B cell (primary cell): ENCODE measurements at regions of chr11 and their contacts with region 1.

Region 1: GRCh38 chr11:74255741-74256369 is 55.6 kb downstream of the P4HA3 start:
- DNase-seq: peak; percentile 72
- ATAC-seq: peak; percentile 51
- H3K4me3 ChIP-seq: no peak overlapping the region
- H3K4me3 Mint-ChIP-seq: no peak overlapping the region
- H3K27ac ChIP-seq: no peak overlapping the region
- H3K27ac Mint-ChIP-seq: no peak overlapping the region
- H3K4me1 ChIP-seq: no peaks in the 10 kb centered on the region
- H3K4me1 Mint-ChIP-seq: no peaks in the 10 kb centered on the region
- H3K27me3 ChIP-seq: no peaks in the 10 kb centered on the region
- H3K27me3 Mint-ChIP-seq: no peaks in the 10 kb centered on the region
- CTCF ChIP-seq: peak; percentile 93

Region 2: DNA sequence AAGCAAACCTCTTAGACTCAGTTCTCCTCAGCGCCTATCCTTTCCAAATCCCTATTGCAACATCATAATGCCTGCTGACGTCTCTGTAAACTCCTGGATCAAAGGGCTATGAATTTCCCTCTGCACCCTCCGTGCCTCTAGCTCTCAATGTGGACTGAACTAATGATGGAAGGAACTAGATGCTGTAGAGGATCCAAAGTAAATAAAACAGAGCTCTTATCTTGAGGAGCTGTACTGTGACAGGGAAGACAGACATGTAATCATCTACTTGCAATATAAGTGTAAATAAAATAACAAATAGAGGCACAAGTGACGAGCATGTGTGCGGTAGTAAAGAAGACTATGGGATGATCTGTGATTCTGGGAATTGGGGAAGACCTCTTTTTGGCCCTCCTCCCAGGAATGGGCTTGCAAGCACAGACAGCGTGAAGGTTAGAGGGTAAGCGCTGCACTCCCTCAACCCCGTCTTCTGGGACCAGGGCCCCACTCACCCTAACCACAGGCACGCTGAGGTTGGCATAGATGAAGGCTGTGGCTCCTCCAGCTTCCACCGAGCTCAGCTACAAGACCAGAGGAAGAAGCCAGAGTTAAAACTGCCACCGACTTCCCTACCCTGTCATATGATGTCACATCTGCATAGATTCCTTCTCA is 13.4 kb after region 1 on chr11:
- CTCF ChIA-PET with region 1: interaction called, 14 read pairs
- POLR2A ChIA-PET with region 1: no interaction called
- intact Hi-C with region 1: no loop called
- DNase-seq: no peak
- ATAC-seq: no peak
- H3K4me3 ChIP-seq: no peak overlapping the region
- H3K4me3 Mint-ChIP-seq: no peak overlapping the region
- H3K27ac ChIP-seq: no peak overlapping the region
- H3K27ac Mint-ChIP-seq: no peak overlapping the region
- H3K4me1 ChIP-seq: no peaks in the 10 kb centered on the region
- H3K4me1 Mint-ChIP-seq: no peaks in the 10 kb centered on the region
- H3K27me3 ChIP-seq: peaks cover 0 to 6% (median 4%) of the 10 kb centered on the region in 4 experiments
- H3K27me3 Mint-ChIP-seq: peaks cover 50% of the 10 kb centered on the region
- CTCF ChIP-seq: no peak

Region 3: GRCh38 chr11:74570266-74571061 is 314.6 kb after region 1 on chr11:
- CTCF ChIA-PET with region 1: interaction called, 12 read pairs
- POLR2A ChIA-PET with region 1: no interaction called
- intact Hi-C with region 1: loop called (anchors 5 kb)
- DNase-seq: peak; percentile 38
- ATAC-seq: no peak
- H3K4me3 ChIP-seq: no peak overlapping the region
- H3K4me3 Mint-ChIP-seq: no peak overlapping the region
- H3K27ac ChIP-seq: no peak overlapping the region
- H3K27ac Mint-ChIP-seq: no peak overlapping the region
- H3K4me1 ChIP-seq: no peaks in the 10 kb centered on the region
- H3K4me1 Mint-ChIP-seq: no peaks in the 10 kb centered on the region
- H3K27me3 ChIP-seq: no peaks in the 10 kb centered on the region
- H3K27me3 Mint-ChIP-seq: peaks cover 23% of the 10 kb centered on the region
- CTCF ChIP-seq: peak; percentile 45